ENCODE measurements at regions of chr22 and their contacts with region 1.

Region 1: GRCh38 chr22:36387752-36388518 is at the start of gene MYH9:
- DNase-seq: peak; percentile 100
- H3K4me3 ChIP-seq: peak within 1 kb of the TSS; percentile 67 to 99 (median 82)
- H3K27ac ChIP-seq: peak within 1 kb of the TSS; percentile 96 to 99 (median 97)
- H3K4me1 ChIP-seq: peaks cover 24 to 40% of the 10 kb centered on the region in 2 donors
- H3K27me3 ChIP-seq: no peaks in the 10 kb centered on the region
- CTCF ChIP-seq: no peak
- POLR2A ChIP-seq: peak; percentile 96 to 99
- total RNA-seq, gene MYH9: 99.4 to 427 (median 350) TPM

Region 2: GRCh38 chr22:36323182-36323854 is 64.6 kb before region 1 on chr22:
- intact Hi-C with region 1: loop called (anchors 5 to 10 kb)
- DNase-seq: peak; percentile 71 to 92 (median 91)
- H3K4me3 ChIP-seq: no peak overlapping the region
- H3K27ac ChIP-seq: peak overlapping the region; percentile 34 to 97 (median 85)
- H3K4me1 ChIP-seq: peaks cover 23 to 58% of the 10 kb centered on the region in 2 donors
- H3K27me3 ChIP-seq: no peaks in the 10 kb centered on the region
- CTCF ChIP-seq: peak in 4 of 6 experiments; percentile 9 to 32 (median 26)
- POLR2A ChIP-seq: peak in 1 of 2 donors; percentile 22

Region 3: DNA sequence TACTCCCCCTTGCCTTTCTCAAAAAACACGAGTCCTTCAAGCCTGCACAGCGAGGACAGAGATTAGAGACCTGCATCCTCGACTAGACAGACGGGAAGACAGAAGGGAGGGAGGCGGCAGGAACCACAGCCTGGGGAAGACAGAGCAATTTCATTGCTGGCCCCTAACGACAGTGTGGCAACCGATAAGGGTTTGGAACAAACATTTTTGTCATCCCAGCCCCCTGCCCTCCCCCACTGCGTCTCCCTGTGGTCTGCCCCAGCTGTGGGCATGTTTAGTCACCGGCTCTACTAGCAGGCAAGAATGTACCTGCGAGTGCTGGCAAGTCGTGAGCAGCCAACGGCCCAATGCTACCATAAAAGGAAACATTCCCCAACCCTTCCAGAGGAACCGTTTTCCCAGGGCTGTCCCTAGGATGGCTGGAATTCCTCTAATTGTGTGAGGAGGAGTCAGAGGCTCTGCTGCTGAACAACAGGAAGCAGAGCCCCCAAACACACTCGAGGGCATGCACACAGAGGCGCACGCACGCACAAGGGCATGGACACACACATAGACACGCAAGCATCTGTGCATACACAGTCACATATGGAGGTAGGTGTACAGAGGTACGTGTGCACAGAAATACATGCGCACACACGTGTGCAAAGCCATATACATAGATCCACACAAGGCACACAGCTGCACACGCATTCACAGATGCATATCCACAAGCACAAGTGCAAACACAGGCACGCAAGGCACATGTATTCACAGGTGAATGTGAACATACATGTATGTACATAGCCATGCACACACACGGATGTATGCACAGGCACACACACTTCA is 58.5 kb before region 1 on chr22:
- intact Hi-C with region 1: loop called (anchors 5 to 10 kb)
- DNase-seq: peak in 6 of 7 donors; percentile 79 to 89 (median 83)
- H3K4me3 ChIP-seq: no peak overlapping the region
- H3K27ac ChIP-seq: peak overlapping the region; percentile 58 to 97 (median 92)
- H3K4me1 ChIP-seq: peaks cover 58 to 93% of the 10 kb centered on the region in 2 donors
- H3K27me3 ChIP-seq: no peaks in the 10 kb centered on the region
- CTCF ChIP-seq: no peak
- POLR2A ChIP-seq: peak in 1 of 2 donors; percentile 3

Region 4: GRCh38 chr22:36461669-36462649 is 74.0 kb after region 1 on chr22:
- intact Hi-C with region 1: loop called in 1 of 2 experiments (anchors 10 kb)
- DNase-seq: peak in 2 of 7 donors; percentile 66 to 75
- H3K4me3 ChIP-seq: no peak overlapping the region
- H3K27ac ChIP-seq: peak overlapping the region in 2 of 5 donors; percentile 4 to 70
- H3K4me1 ChIP-seq: peaks cover 7 to 13% of the 10 kb centered on the region in 2 donors
- H3K27me3 ChIP-seq: no peaks in the 10 kb centered on the region
- CTCF ChIP-seq: no peak
- POLR2A ChIP-seq: no peak

Region 5: DNA sequence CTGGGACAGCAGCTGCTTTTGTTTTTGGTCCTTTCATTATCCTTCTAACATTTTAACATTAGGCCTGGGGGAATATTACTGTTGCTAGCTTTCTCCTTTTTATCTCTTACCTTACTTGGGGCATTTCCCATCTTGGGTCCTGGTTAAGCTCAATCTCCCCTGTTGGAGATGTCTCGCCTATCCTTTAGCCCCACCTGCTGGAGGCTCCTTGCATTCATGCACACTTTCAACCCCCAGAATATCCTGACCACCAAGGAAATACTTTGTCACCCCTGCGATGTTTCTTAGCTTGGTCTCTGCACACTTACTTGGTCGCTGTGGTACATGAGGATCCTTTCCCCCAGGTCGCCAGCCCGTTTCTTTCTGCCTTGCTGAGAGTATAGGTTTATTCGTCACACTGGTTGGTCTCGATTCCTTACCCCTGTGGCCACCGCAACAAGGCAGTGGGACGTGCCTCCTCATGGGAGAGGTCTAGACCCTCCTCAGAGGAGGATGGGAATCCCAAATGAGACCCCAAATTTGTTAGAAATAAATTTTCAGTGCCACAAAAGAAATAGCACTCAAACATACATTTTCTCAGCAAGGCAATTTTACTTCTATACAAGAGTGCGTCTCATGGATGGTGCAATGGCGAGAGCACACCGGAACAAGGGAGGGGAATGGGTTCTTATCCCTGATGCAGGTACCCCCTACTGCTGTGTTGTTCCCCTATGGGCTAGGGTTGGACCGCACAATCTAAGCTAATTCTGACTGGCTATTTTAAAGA is 98.9 kb after region 1 on chr22:
- intact Hi-C with region 1: no loop called
- DNase-seq: peak; percentile 61 to 77 (median 70)
- H3K4me3 ChIP-seq: no peak overlapping the region
- H3K27ac ChIP-seq: no peak overlapping the region
- H3K4me1 ChIP-seq: peaks cover 5 to 7% of the 10 kb centered on the region in 2 donors
- H3K27me3 ChIP-seq: no peaks in the 10 kb centered on the region
- CTCF ChIP-seq: peak; percentile 50 to 75 (median 72)
- POLR2A ChIP-seq: no peak